Activated B cell treated with CpG ODN at 0.5 μM for 24 hours (primary cell): ENCODE measurements at regions of chr9 and their contacts with region 1.

Region 1: GRCh38 chr9:98807070-98807810 is at the start of gene GALNT12:
- DNase-seq: peak; percentile 43
- ATAC-seq: peak; percentile 84
- H3K4me3 Mint-ChIP-seq: peak within 1 kb of the TSS; percentile 86
- H3K27ac Mint-ChIP-seq: peak within 1 kb of the TSS; percentile 18
- H3K4me1 Mint-ChIP-seq: peaks cover 18% of the 10 kb centered on the region
- H3K27me3 Mint-ChIP-seq: peaks cover 15% of the 10 kb centered on the region
- CTCF ChIP-seq: no peak
- total RNA-seq, gene GALNT12: 2.0 and 2.5 TPM in 2 replicates

Region 2: DNA sequence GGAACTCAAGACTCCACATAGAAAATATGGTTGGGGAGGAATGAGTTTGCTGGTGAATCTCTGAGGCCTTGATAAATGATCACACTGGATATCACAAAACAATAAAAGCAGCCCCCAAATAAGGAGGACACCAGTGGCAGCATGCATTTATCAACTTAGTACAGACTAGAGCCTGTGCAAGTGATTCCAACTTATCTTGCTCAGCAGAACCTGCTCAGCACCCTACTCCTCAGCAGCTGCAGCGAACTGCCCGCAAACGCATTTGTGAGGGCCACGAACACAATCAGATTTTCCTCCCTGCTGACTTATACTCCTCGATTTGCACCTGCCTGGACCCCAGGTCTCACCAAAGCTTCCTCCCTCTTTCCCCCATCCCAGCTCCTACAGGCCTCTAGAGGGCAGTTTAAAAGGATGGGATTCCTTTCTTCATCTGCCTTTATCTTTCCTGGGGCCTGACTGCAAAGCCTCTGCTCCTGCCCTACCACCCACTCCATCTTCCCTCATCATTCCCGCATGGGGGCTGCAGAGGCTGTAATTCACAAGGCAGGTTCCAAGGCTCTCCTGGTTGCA is 52.1 kb before region 1 on chr9:
- CTCF ChIA-PET with region 1: no interaction called
- POLR2A ChIA-PET with region 1: no interaction called
- intact Hi-C with region 1: no loop called
- DNase-seq: no peak
- ATAC-seq: no peak
- H3K4me3 Mint-ChIP-seq: no peak overlapping the region
- H3K27ac Mint-ChIP-seq: no peak overlapping the region
- H3K4me1 Mint-ChIP-seq: no peaks in the 10 kb centered on the region
- H3K27me3 Mint-ChIP-seq: no peaks in the 10 kb centered on the region
- CTCF ChIP-seq: no peak

Region 3: GRCh38 chr9:98796364-98797101 is 10.7 kb before region 1 on chr9 and contains the start of gene ANKS6:
- CTCF ChIA-PET with region 1: interaction called, 3 read pairs
- POLR2A ChIA-PET with region 1: interaction called, 3 read pairs
- intact Hi-C with region 1: loop called (anchors 1 kb)
- DNase-seq: peak; percentile 91
- ATAC-seq: peak; percentile 94
- H3K4me3 Mint-ChIP-seq: peak within 1 kb of the TSS; percentile 87
- H3K27ac Mint-ChIP-seq: peak within 1 kb of the TSS; percentile 47
- H3K4me1 Mint-ChIP-seq: peaks cover 16% of the 10 kb centered on the region
- H3K27me3 Mint-ChIP-seq: peaks cover 1% of the 10 kb centered on the region
- CTCF ChIP-seq: no peak
- total RNA-seq, gene ANKS6: 12.1 and 14.8 TPM in 2 replicates

Region 4: DNA sequence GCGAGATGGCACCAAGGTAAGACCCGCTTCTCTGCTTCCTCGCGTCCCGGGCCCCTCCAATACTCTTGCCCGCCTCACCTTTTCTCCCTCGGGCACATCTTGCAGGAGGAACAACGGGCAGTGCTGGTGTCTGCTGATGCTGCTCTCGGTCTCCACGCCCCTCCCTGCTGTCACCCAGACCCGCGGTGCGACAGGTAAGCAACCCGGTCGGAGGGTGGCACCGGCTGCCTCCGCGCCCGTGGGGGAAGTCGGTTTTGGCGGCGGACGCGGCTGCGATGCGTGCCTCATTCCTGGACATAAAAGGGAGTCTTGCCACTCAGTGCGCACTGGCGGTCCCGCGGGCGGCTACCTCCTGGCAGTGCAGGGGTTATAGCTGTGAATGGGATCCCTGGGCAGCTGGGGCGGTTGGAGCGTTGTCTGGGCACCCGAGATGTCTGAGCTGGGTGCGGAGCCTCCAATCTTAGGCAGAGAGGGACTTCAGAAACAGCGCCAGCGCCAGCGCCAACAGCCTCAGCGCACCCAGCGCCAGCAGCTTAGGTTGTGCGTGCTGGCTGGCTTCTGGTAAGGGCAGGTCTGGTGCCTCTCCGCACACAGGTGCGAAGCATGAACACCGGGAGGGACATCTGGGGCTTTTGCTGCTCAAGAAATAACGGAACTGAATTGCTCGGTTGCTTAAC is 137.0 kb after region 1 on chr9:
- CTCF ChIA-PET with region 1: no interaction called
- POLR2A ChIA-PET with region 1: no interaction called
- intact Hi-C with region 1: no loop called
- DNase-seq: no peak
- ATAC-seq: no peak
- H3K4me3 Mint-ChIP-seq: peak overlapping the region; percentile 56
- H3K27ac Mint-ChIP-seq: no peak overlapping the region
- H3K4me1 Mint-ChIP-seq: peaks cover 15% of the 10 kb centered on the region
- H3K27me3 Mint-ChIP-seq: peaks cover 65% of the 10 kb centered on the region
- CTCF ChIP-seq: no peak

Region 5: DNA sequence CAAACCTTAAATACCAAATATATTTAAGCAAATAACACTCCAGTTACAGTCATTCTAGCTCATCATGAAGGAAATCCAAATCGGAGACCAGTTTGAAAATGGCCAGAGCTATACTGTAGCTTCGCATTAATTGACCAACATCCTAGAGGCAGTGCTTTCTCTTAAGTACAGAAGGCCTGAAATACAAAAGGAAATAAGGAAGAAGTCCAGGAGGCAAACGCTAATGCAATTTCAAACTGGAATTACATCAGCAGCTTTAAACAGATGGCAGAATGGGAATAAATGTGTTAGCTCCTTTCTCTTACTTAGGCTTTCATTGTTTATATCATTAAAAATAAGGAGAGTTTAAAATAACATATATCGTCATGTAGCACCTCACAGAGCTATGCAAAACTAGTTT is 611.8 kb after region 1 on chr9:
- CTCF ChIA-PET with region 1: no interaction called
- POLR2A ChIA-PET with region 1: no interaction called
- intact Hi-C with region 1: no loop called
- DNase-seq: no peak
- ATAC-seq: no peak
- H3K4me3 Mint-ChIP-seq: no peak overlapping the region
- H3K27ac Mint-ChIP-seq: no peak overlapping the region
- H3K4me1 Mint-ChIP-seq: peaks cover 4% of the 10 kb centered on the region
- H3K27me3 Mint-ChIP-seq: no peaks in the 10 kb centered on the region
- CTCF ChIP-seq: no peak